ENCODE measurements at regions of chr2 and their contacts with region 1.

Region 1: GRCh38 chr2:173402405-173402974 is 47.8 kb downstream of the CDCA7 start:
- DNase-seq: peak; percentile 40 to 74 (median 67)
- ATAC-seq: peak; percentile 87
- H3K4me3 ChIP-seq: no peak overlapping the region
- H3K4me3 Mint-ChIP-seq: peak overlapping the region in 1 of 10 donors; percentile 62
- H3K27ac ChIP-seq: no peak overlapping the region
- H3K27ac Mint-ChIP-seq: no peak overlapping the region
- H3K4me1 ChIP-seq: peaks cover 0 to 3% of the 10 kb centered on the region in 2 donors
- H3K4me1 Mint-ChIP-seq: peaks cover 0 to 12% (median 4%) of the 10 kb centered on the region in 7 donors
- H3K27me3 ChIP-seq: peaks cover 3 to 7% of the 10 kb centered on the region in 2 donors
- H3K27me3 Mint-ChIP-seq: peaks cover 55 to 73% (median 62%) of the 10 kb centered on the region in 5 donors

Region 2: GRCh38 chr2:173448938-173449471 is 46.5 kb after region 1 on chr2:
- CTCF ChIA-PET with region 1: interaction called, 3 read pairs
- POLR2A ChIA-PET with region 1: no interaction called
- intact Hi-C with region 1: loop called (anchors 1 kb)
- DNase-seq: peak; percentile 12 to 55 (median 31)
- ATAC-seq: peak; percentile 75
- H3K4me3 ChIP-seq: no peak overlapping the region
- H3K4me3 Mint-ChIP-seq: peak overlapping the region in 9 of 10 donors; percentile 25 to 75 (median 46)
- H3K27ac ChIP-seq: no peak overlapping the region
- H3K27ac Mint-ChIP-seq: peak overlapping the region in 3 of 9 donors; percentile 34 to 69 (median 62)
- H3K4me1 ChIP-seq: peaks cover 0 to 8% of the 10 kb centered on the region in 2 donors
- H3K4me1 Mint-ChIP-seq: peaks cover 10 to 29% (median 15%) of the 10 kb centered on the region in 7 donors
- H3K27me3 ChIP-seq: no peaks in the 10 kb centered on the region
- H3K27me3 Mint-ChIP-seq: peaks cover 6 to 30% (median 22%) of the 10 kb centered on the region in 5 donors

Region 3: GRCh38 chr2:174078275-174078674 is 675.8 kb after region 1 on chr2:
- CTCF ChIA-PET with region 1: no interaction called
- POLR2A ChIA-PET with region 1: no interaction called
- intact Hi-C with region 1: loop called in 1 of 2 experiments (anchors 1 kb)
- DNase-seq: peak in 1 of 9 donors; percentile 5
- ATAC-seq: no peak
- H3K4me3 ChIP-seq: no peak overlapping the region
- H3K4me3 Mint-ChIP-seq: no peak overlapping the region
- H3K27ac ChIP-seq: no peak overlapping the region
- H3K27ac Mint-ChIP-seq: no peak overlapping the region
- H3K4me1 ChIP-seq: no peaks in the 10 kb centered on the region
- H3K4me1 Mint-ChIP-seq: no peaks in the 10 kb centered on the region
- H3K27me3 ChIP-seq: no peaks in the 10 kb centered on the region
- H3K27me3 Mint-ChIP-seq: no peaks in the 10 kb centered on the region

Region 4: GRCh38 chr2:174326161-174327020 is 923.9 kb after region 1 on chr2:
- CTCF ChIA-PET with region 1: no interaction called
- POLR2A ChIA-PET with region 1: no interaction called
- intact Hi-C with region 1: loop called in 1 of 2 experiments (anchors 5 kb)
- DNase-seq: peak in 4 of 9 donors; percentile 24 to 52 (median 32)
- ATAC-seq: peak; percentile 43
- H3K4me3 ChIP-seq: peak overlapping the region; percentile 31
- H3K4me3 Mint-ChIP-seq: peak overlapping the region; percentile 75 to 86 (median 82)
- H3K27ac ChIP-seq: no peak overlapping the region
- H3K27ac Mint-ChIP-seq: peak overlapping the region in 3 of 9 donors; percentile 1 to 39 (median 4)
- H3K4me1 ChIP-seq: peaks cover 13 to 15% of the 10 kb centered on the region in 2 donors
- H3K4me1 Mint-ChIP-seq: peaks cover 15 to 37% (median 23%) of the 10 kb centered on the region in 7 donors
- H3K27me3 ChIP-seq: peaks cover 45 to 55% of the 10 kb centered on the region in 2 donors
- H3K27me3 Mint-ChIP-seq: peaks cover 85 to 95% (median 86%) of the 10 kb centered on the region in 5 donors

Region 5: GRCh38 chr2:174682578-174683391 is 1280.3 kb after region 1 on chr2:
- CTCF ChIA-PET with region 1: no interaction called
- POLR2A ChIA-PET with region 1: no interaction called
- intact Hi-C with region 1: loop called in 1 of 2 experiments (anchors 10 kb)
- DNase-seq: peak; percentile 56 to 73 (median 71)
- ATAC-seq: peak; percentile 78
- H3K4me3 ChIP-seq: peak overlapping the region; percentile 72
- H3K4me3 Mint-ChIP-seq: peak overlapping the region; percentile 92 to 99 (median 96)
- H3K27ac ChIP-seq: peak overlapping the region; percentile 88
- H3K27ac Mint-ChIP-seq: peak overlapping the region; percentile 91 to 98 (median 96)
- H3K4me1 ChIP-seq: peaks cover 11% of the 10 kb centered on the region in 2 donors
- H3K4me1 Mint-ChIP-seq: peaks cover 34 to 69% (median 61%) of the 10 kb centered on the region in 7 donors
- H3K27me3 ChIP-seq: no peaks in the 10 kb centered on the region
- H3K27me3 Mint-ChIP-seq: no peaks in the 10 kb centered on the region